PC-9 (cell line): ENCODE measurements at regions of chr5 and their contacts with region 1.

Region 1: DNA sequence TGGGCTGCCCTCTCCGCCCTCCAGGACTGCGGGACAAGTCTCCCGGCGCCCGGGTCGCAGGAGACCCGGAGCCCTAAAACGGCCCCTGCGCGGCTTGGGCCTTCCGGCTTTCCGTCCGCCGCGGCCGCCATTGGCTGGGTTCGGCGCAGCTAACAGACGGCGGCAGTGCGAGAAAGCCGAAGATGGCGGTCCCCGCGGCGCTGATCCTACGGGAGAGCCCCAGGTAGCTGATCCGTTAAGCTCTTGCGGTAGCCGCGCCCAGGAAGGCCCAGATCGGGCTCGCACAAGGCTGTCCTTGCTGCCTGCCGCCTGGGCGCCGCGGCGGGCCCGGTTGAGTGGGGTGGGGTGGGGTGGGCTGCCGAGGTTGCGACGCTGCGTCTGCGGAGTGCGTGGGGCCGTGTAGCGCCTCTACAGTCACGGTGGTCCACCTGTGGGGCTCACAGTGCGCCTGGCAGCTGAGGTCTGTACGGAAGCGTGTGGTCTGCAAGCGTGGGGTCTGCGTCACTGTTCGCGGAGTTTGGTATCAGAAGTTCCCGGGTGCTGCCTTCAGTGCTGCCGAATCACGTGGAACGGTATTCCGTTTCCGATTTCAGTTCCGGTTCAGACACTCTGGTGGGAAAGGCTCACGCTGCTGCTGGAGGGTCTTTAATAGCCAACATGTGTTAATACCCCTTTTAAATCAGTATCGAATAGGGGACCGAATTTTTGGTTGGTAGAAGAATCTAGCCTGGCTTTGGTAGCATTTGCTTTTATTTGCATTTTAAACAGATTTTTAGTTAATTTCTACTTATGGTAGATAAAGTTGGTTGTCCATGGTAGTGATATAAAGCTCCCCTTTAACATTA is at the start of gene COMMD10:
- DNase-seq: peak; percentile 45 to 61
- H3K4me3 ChIP-seq: peak within 1 kb of the TSS; percentile 67
- H3K27ac ChIP-seq: peak within 1 kb of the TSS; percentile 58
- H3K4me1 ChIP-seq: peaks cover 6% of the 10 kb centered on the region; the same call in 1 of the 2 replicates
- H3K27me3 ChIP-seq: no peaks in the 10 kb centered on the region
- CTCF ChIP-seq: no peak
- total RNA-seq, gene COMMD10: 10.4 and 17.9 TPM in 2 replicates

Region 2: DNA sequence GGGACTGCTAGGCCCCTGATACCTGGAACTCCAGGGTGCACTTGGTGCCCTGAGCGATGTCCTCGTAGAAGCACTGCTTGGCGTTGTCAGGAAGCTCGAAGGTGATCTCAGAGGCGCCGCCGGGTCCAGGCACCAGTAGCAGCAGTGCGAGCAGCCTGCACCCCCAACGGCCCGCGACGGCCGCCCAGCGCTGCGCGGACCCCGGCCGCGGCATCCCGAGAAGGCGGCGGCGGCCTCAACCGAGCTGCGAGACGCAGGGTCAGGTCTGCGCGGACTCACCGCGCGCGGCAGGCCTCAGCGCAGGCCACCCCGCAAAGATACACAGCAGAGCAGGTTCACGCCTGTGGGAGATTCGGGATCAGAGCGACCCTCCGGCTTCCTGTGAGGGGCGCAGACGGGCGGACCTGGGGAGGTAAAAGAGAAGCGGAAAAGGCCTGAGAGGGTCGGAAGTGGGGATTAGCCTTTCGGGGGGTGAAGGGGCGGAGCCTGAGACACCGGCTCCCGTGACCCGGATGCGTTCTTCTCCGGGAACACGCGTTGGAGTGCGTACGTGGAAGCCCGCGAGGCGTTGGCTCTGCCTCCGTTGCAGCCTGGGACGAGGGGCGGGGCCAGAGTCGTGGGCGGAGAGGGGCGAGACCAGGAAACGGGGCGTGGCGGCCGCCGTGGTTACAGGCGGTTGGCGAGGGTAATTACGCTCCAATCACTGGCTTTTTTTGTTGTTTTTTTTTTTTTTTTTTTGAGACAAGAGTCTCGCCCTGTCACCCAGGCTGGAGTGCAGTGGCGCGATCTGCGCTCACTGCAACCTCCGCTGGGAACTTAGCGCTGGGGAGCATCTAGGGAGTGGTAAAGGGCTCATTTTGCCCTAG is 459.3 kb before region 1 on chr5 and contains the start of gene TMED7:
- CTCF ChIA-PET with region 1: no interaction called
- POLR2A ChIA-PET with region 1: no interaction called
- intact Hi-C with region 1: loop called (anchors 5 kb)
- DNase-seq: peak; percentile 91 to 98
- H3K4me3 ChIP-seq: peak within 1 kb of the TSS; percentile 98
- H3K27ac ChIP-seq: peak within 1 kb of the TSS; percentile 81
- H3K4me1 ChIP-seq: peaks cover 19% of the 10 kb centered on the region
- H3K27me3 ChIP-seq: no peaks in the 10 kb centered on the region
- CTCF ChIP-seq: no peak
- total RNA-seq, gene TMED7: 70.7 and 78.9 TPM in 2 replicates

Region 3: GRCh38 chr5:115948091-115948534 is 137.0 kb before region 1 on chr5:
- CTCF ChIA-PET with region 1: no interaction called
- POLR2A ChIA-PET with region 1: no interaction called
- intact Hi-C with region 1: no loop called
- DNase-seq: no peak
- H3K4me3 ChIP-seq: no peak overlapping the region
- H3K27ac ChIP-seq: no peak overlapping the region
- H3K4me1 ChIP-seq: no peaks in the 10 kb centered on the region
- H3K27me3 ChIP-seq: no peaks in the 10 kb centered on the region
- CTCF ChIP-seq: no peak

Region 4: DNA sequence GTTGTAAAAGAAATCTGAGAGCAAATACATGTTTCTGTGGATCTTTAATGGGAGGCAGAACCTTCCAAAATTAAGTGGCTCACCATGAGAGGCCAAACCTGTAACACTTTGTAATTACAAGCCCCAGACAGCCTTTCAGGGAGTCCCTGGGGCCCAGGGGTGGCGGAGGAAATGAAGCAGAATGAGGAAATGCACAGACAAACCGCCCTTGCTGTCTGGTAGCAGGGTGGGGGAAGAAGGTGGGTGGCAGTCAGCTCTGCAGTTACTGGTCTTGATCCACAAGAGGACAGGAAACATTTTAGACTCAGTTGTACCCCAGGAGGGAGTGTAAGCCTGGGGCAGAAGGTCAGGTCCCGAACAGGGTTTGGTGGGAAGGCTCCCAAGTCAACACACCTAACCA is 46.3 kb before region 1 on chr5:
- CTCF ChIA-PET with region 1: no interaction called
- POLR2A ChIA-PET with region 1: no interaction called
- intact Hi-C with region 1: loop called (anchors 5 kb)
- DNase-seq: no peak
- H3K4me3 ChIP-seq: no peak overlapping the region
- H3K27ac ChIP-seq: no peak overlapping the region
- H3K4me1 ChIP-seq: 0 out of 2 replicates have a peak, but pooled peaks cover 6% of the 10 kb centered on the region
- H3K27me3 ChIP-seq: no peaks in the 10 kb centered on the region
- CTCF ChIP-seq: no peak